HEK293 (cell line): ENCODE measurements at regions of chr17 and their contacts with region 1.

Region 1: DNA sequence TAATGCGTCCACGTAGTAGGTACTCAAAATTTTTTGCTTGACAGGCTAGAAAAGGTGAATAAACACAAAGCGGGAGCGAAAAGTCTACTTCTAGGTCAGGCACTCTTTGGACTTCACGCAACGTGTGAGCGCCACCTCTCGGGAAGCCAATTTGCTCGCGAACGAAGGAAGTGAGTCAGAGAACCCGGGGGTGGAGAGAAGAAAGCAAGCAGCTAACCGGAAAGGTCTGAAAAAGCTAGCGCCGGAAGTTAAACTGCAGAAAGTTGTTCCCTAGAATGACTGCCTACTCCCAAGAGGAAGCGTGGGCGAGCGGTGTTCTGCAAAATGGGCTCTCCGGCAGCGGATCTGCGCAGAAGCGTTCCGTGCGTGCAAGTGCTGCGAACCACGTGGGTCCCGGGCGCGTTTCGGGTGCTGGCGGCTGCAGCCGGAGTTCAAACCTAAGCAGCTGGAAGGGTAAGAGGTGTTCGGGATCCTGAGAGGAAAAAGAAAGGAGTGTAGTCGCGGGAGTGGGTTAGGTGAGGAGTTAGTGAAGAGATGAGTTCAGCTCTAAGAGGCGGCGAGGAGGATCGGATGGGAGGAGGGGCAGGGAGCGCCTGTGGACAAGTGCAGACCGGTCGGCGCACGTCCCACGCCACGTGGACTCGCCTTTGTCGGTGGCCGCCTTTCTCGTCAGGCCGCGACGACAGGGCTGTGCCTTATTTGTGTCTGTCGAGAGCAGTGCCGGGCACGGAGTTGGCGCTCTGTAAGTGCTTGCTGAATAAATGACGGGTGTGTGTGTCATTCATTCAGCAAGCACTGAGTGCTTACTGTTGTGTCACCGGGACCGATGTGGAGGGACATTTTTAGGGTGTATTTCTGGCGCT is at the start of gene NME1:
- H3K4me3 ChIP-seq: peak within 1 kb of the TSS; percentile 72
- H3K27ac ChIP-seq: peak within 1 kb of the TSS; percentile 76
- H3K4me1 ChIP-seq: peaks cover 4% of the 10 kb centered on the region; the same call in 1 of the 2 replicates
- CTCF ChIP-seq: peak; percentile 91

Region 2: DNA sequence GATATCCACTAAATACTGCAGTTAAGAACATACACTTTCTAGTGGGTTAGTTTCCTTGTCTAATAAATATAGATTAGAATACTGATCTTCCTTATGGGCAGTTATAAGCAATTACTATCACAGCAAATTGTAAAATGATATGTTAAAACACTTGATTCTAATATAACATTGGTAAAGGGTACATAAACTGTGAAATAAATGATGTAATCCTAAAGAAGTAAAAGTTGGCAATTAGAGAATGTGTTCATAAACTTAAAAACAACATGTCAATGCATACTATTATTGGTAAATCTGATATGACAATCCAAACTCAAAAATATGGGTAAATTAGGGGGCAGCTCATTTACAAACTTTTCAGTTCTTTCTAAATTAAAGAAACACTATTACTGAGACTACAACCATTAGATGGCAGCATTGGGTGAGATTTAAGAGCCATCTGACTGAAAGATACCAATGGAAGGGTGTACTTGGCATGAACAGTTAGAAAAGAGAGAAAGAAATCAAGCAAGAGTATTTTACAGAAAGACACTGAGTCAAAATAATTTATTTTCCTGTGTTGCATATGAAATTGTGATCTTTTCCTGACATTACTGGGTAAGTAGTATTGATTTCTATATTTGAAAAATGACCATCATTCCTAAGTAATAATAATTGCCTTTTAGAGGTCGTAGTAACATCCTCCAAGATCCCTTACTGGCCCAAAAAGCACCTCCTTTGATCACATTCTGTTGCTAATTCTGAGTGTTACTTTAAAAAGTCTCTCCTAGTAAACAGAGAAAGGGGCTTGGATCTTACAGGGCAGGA is 152.4 kb before region 1 on chr17:
- CTCF ChIA-PET with region 1: interaction called, 107 read pairs
- POLR2A ChIA-PET with region 1: interaction called, 7 read pairs
- H3K4me3 ChIP-seq: no peak overlapping the region
- H3K27ac ChIP-seq: no peak overlapping the region
- H3K4me1 ChIP-seq: no peaks in the 10 kb centered on the region
- CTCF ChIP-seq: no peak

Region 3: GRCh38 chr17:51034800-51035199 is 118.6 kb before region 1 on chr17:
- CTCF ChIA-PET with region 1: no interaction called
- POLR2A ChIA-PET with region 1: no interaction called
- H3K4me3 ChIP-seq: no peak overlapping the region
- H3K27ac ChIP-seq: no peak overlapping the region
- H3K4me1 ChIP-seq: no peaks in the 10 kb centered on the region
- CTCF ChIP-seq: no peak

Region 4: GRCh38 chr17:51046514-51047384 is 106.7 kb before region 1 on chr17:
- CTCF ChIA-PET with region 1: interaction called, 18 read pairs
- POLR2A ChIA-PET with region 1: interaction called, 4 read pairs
- H3K4me3 ChIP-seq: peak overlapping the region; percentile 6
- H3K27ac ChIP-seq: peak overlapping the region; percentile 52
- H3K4me1 ChIP-seq: peaks cover 15% of the 10 kb centered on the region
- CTCF ChIP-seq: no peak

Region 5: GRCh38 chr17:51056813-51057510 is 96.5 kb before region 1 on chr17:
- CTCF ChIA-PET with region 1: interaction called, 11 read pairs
- POLR2A ChIA-PET with region 1: interaction called, 3 read pairs
- H3K4me3 ChIP-seq: no peak overlapping the region
- H3K27ac ChIP-seq: peak overlapping the region; percentile 17
- H3K4me1 ChIP-seq: peaks cover 13% of the 10 kb centered on the region
- CTCF ChIP-seq: 0 out of 2 replicates have a peak, but pooled peaks have one; percentile 12

Region 6: GRCh38 chr17:51120739-51121617 is 32.5 kb before region 1 on chr17 and contains the start of gene SPAG9:
- CTCF ChIA-PET with region 1: interaction called, 9 read pairs
- POLR2A ChIA-PET with region 1: interaction called, 23 read pairs
- H3K4me3 ChIP-seq: peak within 1 kb of the TSS; percentile 96
- H3K27ac ChIP-seq: peak within 1 kb of the TSS; percentile 95
- H3K4me1 ChIP-seq: peaks cover 14% of the 10 kb centered on the region
- CTCF ChIP-seq: no peak

Region 7: DNA sequence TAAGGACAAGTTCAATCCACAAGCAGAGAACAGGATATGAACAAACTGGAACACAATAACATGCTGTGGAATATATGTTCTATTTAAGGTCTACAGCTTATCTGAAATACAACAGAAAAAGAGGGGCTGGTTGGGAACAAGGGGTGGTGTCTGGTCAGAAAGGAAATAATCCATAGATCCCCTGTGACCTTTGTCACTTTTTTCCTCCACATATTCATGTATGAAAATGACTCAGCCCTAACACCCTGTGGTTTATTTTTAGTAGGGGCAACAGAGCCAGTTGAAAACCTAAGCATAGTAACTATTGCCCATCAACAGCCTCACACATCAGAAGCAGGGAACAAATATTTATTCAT is 20.5 kb before region 1 on chr17:
- CTCF ChIA-PET with region 1: interaction called, 19 read pairs
- POLR2A ChIA-PET with region 1: interaction called, 8 read pairs
- H3K4me3 ChIP-seq: no peak overlapping the region
- H3K27ac ChIP-seq: no peak overlapping the region
- H3K4me1 ChIP-seq: no peaks in the 10 kb centered on the region
- CTCF ChIP-seq: no peak

Region 8: DNA sequence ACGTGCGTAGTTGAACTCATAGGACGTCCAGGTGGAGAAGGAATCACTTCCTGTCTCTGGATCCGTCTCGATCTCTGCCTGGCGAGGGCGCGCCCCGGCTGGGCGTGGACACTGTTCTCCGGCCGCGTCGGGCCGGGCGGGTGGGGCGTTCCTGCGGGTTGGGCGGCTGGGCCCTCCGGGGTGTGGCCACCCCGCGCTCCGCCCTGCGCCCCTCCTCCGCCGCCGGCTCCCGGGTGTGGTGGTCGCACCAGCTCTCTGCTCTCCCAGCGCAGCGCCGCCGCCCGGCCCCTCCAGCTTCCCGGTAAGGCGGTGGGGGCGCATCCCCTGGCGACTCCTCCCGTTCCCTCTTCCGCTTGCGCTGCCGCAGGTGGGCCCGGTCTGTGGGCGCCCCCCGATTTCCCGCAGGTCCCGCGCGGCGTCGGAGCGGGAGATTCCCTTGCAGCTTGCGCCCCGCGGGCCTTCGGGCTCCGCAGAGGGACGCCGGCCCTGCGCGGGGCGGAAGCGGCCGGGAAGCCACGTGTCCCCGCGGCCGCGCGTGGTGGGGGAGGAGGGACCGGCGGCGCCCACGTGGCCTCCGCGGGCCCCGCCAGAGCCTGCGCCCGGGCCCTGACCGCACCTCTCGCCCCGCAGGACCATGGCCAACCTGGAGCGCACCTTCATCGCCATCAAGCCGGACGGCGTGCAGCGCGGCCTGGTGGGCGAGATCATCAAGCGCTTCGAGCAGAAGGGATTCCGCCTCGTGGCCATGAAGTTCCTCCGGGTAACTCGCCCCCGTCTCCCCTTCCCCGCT is 13.0 kb after region 1 on chr17 and contains the start of gene NME2:
- CTCF ChIA-PET with region 1: interaction called, 10 read pairs
- POLR2A ChIA-PET with region 1: interaction called, 36 read pairs
- H3K4me3 ChIP-seq: peak within 1 kb of the TSS; percentile 88
- H3K27ac ChIP-seq: peak within 1 kb of the TSS; percentile 91
- H3K4me1 ChIP-seq: 0 out of 2 replicates have a peak, but pooled peaks cover 5% of the 10 kb centered on the region
- CTCF ChIP-seq: peak; percentile 48

Region 9: GRCh38 chr17:51228161-51228560 is 74.7 kb after region 1 on chr17:
- CTCF ChIA-PET with region 1: no interaction called
- POLR2A ChIA-PET with region 1: no interaction called
- H3K4me3 ChIP-seq: no peak overlapping the region
- H3K27ac ChIP-seq: no peak overlapping the region
- H3K4me1 ChIP-seq: peaks cover 7% of the 10 kb centered on the region
- CTCF ChIP-seq: no peak

Region 10: DNA sequence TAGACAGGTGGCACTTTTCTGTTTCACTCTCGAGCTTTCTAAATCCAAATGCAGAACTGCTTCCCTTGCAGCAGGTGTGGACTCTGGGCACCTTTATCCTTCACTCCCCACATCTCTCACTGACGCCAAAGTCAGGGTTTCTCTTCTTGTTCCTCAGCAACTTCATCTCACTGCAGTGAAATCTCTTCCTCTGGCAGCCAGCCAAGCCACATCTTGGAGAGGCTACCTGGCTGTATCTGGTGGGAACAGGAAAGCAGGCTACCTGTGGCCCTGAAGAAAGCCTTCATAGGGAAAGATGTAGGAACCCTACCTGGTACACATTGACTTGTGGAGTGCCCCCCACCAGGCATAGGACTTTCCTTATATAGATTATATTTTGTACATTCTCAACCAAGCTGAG is 266.0 kb after region 1 on chr17:
- CTCF ChIA-PET with region 1: no interaction called
- POLR2A ChIA-PET with region 1: no interaction called
- H3K4me3 ChIP-seq: no peak overlapping the region
- H3K27ac ChIP-seq: no peak overlapping the region
- H3K4me1 ChIP-seq: no peaks in the 10 kb centered on the region
- CTCF ChIP-seq: no peak